Body of pancreas (tissue), 4 donors: ENCODE measurements at regions of chr14 and their contacts with region 1.

Region 1: DNA sequence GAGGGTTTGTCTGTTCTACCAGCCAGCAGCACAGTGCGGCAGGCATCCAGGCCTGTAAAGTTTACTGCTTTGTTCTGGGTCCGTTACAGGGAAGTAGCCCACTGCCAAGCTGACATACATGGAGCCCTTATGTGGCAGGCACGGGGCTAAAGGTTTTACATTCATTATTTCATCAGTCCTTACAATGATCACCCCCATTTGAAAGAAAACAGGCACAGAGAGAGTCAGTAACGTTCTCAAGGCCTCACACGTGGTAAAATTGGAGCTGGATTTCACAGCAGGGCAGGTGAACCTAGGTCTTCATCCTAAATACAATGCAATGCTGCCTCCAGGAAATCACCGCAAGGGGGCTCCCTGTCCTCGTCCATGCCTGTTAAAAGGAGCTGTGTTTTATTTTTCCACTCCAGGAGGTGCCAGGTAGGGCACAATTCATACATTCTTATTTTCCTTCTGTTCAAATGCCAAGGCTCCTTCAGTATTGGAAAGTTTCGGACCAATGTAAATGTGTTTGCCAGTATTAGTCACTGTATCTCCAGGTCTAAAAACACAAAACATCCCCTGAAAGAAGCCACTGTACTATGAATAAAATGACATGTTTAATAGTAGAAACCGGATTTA is 172.2 kb upstream of the GZMB start:
- DNase-seq: peak; percentile 84 to 91 (median 86)
- ATAC-seq: peak; percentile 86
- H3K4me3 ChIP-seq: no peak overlapping the region
- H3K27ac ChIP-seq: peak overlapping the region in 1 of 4 donors; percentile 11
- H3K4me1 ChIP-seq: peaks cover 38% of the 10 kb centered on the region
- H3K27me3 ChIP-seq: no peaks in the 10 kb centered on the region
- CTCF ChIP-seq: peak; percentile 78 to 93 (median 91)
- POLR2A ChIP-seq: no peak

Region 2: DNA sequence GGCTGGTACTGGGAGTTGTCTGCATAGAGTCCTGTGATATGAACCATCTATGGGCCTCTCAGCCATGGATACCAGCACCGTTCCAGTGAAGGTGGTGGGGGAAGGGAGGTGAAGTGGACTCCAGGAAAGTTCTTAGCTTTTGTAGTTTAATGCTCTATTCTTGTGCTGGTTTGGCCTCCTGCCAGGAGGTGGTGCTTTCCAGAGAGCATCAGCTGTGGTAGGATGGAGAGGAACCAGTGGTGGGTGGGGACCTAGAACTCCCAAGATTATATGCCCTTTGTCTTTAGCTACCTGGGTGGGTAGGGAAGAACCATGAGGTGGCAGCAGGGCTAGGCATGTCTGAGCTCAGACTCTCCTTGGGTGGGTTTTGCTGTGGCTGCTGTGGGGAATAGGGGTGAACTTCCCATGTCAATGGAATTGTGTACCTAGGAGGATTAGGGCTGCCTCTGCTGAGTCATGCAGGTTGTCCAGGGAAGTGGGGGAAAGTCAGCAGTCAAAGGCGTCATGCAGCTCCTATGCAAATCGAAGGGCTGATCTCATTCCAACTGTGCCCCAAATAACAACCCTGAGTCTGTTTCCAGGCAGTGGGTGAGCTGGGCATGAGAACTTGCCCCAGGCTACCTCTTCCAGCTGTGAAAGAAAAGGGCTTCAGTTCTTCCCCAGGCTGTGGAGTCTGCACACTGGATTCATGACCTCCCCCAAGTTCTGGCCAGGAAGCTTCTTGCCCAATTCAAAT is 210.9 kb before region 1 on chr14:
- intact Hi-C with region 1: no loop called
- DNase-seq: no peak
- ATAC-seq: no peak
- H3K4me3 ChIP-seq: no peak overlapping the region
- H3K27ac ChIP-seq: no peak overlapping the region
- H3K4me1 ChIP-seq: no peaks in the 10 kb centered on the region
- H3K27me3 ChIP-seq: no peaks in the 10 kb centered on the region
- CTCF ChIP-seq: no peak
- POLR2A ChIP-seq: no peak

Region 3: DNA sequence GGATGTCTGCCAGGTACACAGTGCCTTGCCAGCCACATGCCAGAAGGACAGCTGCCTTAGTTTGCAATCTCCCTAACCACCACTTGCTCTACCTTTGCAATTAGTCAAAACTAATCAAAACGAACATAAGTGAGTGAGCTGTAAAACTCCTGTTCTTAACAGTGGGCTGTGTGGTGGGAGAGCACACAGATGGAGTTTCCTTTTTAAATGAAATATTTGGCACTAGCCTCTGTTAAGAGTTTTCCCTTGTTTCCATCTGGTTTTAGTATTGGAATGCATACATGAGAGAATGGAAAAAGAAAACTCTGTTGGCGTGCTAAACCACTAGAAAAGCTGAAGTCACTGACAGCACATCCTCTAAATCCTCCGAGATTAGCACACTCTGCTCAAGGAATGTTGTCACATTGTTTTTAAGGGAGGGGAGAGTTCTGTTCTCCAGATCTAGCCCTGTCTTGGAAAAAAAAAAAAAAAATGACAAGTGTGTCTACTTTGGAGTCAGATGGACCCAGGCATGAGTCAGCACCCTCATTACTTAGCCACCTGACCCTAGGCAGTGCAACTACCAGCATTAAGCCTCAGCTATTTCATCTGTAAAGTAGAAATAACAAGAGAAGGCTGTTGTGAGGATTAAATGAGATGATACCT is 159.9 kb after region 1 on chr14:
- intact Hi-C with region 1: no loop called
- DNase-seq: peak; percentile 55 to 72 (median 67)
- ATAC-seq: peak; percentile 81
- H3K4me3 ChIP-seq: no peak overlapping the region
- H3K27ac ChIP-seq: peak overlapping the region in 3 of 4 donors; percentile 58 to 83 (median 70)
- H3K4me1 ChIP-seq: peaks cover 47% of the 10 kb centered on the region
- H3K27me3 ChIP-seq: no peaks in the 10 kb centered on the region
- CTCF ChIP-seq: peak in 1 of 7 experiments; percentile 11
- POLR2A ChIP-seq: no peak

Region 4: DNA sequence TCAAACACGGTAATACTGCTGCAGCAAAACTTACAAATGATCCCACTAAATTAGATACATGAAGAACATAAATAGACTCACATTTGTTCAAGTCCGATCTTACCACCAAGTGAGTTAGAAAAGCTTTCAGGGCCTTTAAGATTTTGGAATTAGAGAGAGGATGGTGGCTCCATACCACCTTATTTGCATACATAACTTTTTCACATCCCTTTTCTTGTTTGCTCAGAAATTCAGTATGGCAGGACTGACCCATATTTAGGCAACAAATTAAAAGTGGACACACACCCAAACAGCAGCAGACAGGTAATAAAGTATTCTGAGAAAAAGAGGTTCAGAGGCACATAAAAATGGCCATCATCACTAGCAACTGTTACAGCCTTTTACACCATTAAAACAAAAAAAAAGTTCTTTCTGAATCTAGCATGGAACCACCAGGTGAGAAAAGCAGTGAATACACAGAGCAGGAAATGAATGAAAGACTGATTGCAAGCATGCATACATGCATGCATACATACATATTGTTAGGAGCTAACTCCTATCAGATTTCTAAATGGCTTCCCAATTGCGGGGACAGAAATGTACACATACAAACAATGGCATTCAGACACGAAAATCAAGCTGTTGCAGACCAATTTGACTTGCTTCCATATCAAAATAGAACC is 220.4 kb after region 1 on chr14:
- intact Hi-C with region 1: no loop called
- DNase-seq: no peak
- ATAC-seq: no peak
- H3K4me3 ChIP-seq: no peak overlapping the region
- H3K27ac ChIP-seq: no peak overlapping the region
- H3K4me1 ChIP-seq: peaks cover 17% of the 10 kb centered on the region
- H3K27me3 ChIP-seq: no peaks in the 10 kb centered on the region
- CTCF ChIP-seq: no peak
- POLR2A ChIP-seq: no peak

Region 5: DNA sequence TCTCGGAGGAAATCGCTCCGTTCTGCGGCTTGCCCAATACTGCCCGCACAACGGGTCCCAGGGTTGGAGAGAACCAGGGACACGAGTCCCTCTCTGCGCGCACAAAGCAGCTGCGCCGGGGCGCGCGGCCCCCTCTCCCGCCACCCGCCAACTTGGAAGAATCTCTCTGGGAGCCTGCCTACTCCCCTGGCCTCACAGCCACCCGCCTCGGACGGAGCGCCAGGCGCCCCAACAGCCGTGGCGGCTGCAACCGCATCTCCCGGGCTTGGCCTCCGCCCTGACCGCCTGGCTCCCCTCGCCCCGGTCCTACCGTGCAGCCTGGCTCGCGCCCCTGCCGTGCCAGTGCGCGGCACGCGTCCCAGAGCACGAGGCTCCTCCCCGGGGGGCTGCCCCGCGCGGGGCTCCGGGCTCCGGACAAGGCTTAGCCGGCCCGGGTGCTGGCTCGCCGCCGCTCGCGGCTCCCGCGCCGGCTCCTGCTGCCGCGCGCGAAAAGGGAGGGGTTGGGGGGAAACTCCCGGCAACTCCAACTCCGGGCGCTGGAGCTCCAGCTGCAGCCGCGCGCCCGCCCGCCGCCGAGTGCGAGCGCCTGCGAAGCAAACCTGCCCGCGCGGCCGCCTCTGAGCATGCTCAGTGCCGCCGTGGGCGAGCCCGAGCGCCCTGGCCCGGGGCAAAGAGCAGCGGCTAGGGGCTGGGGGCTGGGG is 243.5 kb after region 1 on chr14 and contains the start of gene STXBP6:
- intact Hi-C with region 1: loop called (anchors 10 kb)
- DNase-seq: peak; percentile 87 to 90 (median 88)
- ATAC-seq: peak; percentile 78
- H3K4me3 ChIP-seq: peak within 1 kb of the TSS; percentile 21 to 51
- H3K27ac ChIP-seq: peak within 1 kb of the TSS; percentile 93 to 95 (median 94)
- H3K4me1 ChIP-seq: peaks cover 76% of the 10 kb centered on the region
- H3K27me3 ChIP-seq: no peaks in the 10 kb centered on the region
- CTCF ChIP-seq: peak in 2 of 7 experiments; percentile 10 to 26
- POLR2A ChIP-seq: peak; percentile 65 to 81 (median 76)
- total RNA-seq, gene STXBP6: 20.1 to 28.3 TPM

Region 6: DNA sequence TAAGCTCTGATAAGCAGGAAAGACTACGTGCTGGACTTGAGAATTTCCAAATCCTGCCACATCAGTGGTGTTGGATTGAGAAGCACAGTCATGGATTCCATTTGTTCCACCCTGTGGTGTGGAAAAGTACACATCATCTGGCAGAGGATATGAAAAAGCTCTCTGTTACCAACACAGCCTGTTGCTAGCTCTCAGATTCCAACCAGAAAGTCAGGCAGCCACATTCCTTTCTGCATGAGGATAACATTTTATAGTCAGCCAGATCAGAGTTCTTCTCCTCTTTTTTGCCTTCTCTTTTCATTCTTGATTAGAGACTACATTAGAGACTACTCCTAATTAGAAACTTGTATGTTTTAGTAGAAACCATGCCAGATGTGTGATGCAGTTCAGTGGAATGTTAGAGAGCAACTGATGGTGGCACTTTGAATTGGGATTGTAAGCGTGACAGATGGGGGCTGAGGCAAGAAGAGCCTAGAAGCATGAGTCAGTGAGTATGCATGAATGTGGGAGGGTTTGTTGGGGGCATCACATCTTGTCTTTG is 305.0 kb after region 1 on chr14:
- intact Hi-C with region 1: no loop called
- DNase-seq: peak; percentile 14 to 56 (median 28)
- ATAC-seq: peak; percentile 94
- H3K4me3 ChIP-seq: no peak overlapping the region
- H3K27ac ChIP-seq: peak overlapping the region in 2 of 4 donors; percentile 48 to 53
- H3K4me1 ChIP-seq: peaks cover 31% of the 10 kb centered on the region
- H3K27me3 ChIP-seq: no peaks in the 10 kb centered on the region
- CTCF ChIP-seq: peak in 1 of 7 experiments; percentile 10
- POLR2A ChIP-seq: no peak

Region 7: GRCh38 chr14:25136811-25137210 is 330.6 kb after region 1 on chr14:
- intact Hi-C with region 1: loop called (anchors 5 kb)
- DNase-seq: no peak
- ATAC-seq: no peak
- H3K4me3 ChIP-seq: no peak overlapping the region
- H3K27ac ChIP-seq: no peak overlapping the region
- H3K4me1 ChIP-seq: peaks cover 4% of the 10 kb centered on the region
- H3K27me3 ChIP-seq: no peaks in the 10 kb centered on the region
- CTCF ChIP-seq: no peak
- POLR2A ChIP-seq: no peak